ENCODE measurements at regions of chr17 and their contacts with region 1.

Region 1: DNA sequence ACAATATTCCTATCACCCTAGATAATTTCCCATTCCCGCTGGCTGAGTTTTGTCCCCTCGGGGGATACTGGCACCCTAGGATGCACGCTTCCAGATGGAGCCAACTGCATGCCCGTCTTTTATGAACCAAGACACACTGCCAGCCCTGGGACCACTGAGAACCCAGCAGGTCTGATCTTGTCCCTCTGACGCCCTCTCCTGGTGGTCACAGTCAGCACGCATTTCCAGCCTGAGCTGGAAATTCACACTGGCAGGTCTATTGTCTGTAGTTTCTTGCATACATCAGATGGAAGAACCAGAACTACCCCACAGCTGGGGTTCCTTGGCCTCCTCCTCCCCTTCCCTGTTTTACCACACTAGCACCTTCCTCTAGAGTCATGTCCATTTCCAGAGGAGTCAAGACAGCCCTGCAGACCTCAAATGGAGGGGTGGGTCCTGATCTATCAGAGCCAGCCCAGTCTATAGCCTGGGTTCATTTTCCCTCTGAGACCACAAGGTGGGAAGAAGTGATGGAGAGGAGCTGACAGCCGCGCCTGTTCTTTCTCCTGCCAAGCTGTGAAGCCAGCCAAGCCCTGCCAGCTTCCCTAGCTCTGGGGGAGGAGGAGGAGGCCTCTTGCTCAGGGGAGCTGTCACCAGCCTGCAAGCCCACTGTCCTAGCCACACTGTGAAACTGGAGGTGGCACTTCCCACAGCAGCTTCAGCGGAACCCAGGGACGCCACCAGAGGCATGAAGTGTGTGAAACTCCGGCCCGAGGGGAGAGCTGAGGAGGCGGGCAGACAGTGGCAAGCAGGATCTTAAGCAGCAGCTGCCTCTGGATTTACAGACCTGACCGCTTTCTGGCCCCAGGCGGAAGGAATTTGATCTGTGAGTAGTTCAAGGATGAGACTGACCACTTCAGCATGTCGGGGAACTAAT is 29.3 kb downstream of the MXRA7 start:
- DNase-seq: peak; percentile 87
- ATAC-seq: peak; percentile 80
- H3K4me3 Mint-ChIP-seq: no peak overlapping the region
- H3K27ac Mint-ChIP-seq: no peak overlapping the region
- H3K4me1 Mint-ChIP-seq: peaks cover 5% of the 10 kb centered on the region
- H3K27me3 Mint-ChIP-seq: no peaks in the 10 kb centered on the region
- CTCF ChIP-seq: peak; percentile 81

Region 2: GRCh38 chr17:76385892-76386721 is 295.4 kb before region 1 on chr17:
- CTCF ChIA-PET with region 1: no interaction called
- POLR2A ChIA-PET with region 1: no interaction called
- intact Hi-C with region 1: no loop called
- DNase-seq: peak; percentile 93
- ATAC-seq: peak; percentile 22
- H3K4me3 Mint-ChIP-seq: peak overlapping the region; percentile 67
- H3K27ac Mint-ChIP-seq: no peak overlapping the region
- H3K4me1 Mint-ChIP-seq: peaks cover 3% of the 10 kb centered on the region
- H3K27me3 Mint-ChIP-seq: no peaks in the 10 kb centered on the region
- CTCF ChIP-seq: peak; percentile 21

Region 3: GRCh38 chr17:76557368-76558197 is 123.9 kb before region 1 on chr17:
- CTCF ChIA-PET with region 1: interaction called, 16 read pairs
- POLR2A ChIA-PET with region 1: interaction called, 3 read pairs
- intact Hi-C with region 1: no loop called
- DNase-seq: peak; percentile 97
- ATAC-seq: peak; percentile 94
- H3K4me3 Mint-ChIP-seq: peak overlapping the region; percentile 99
- H3K27ac Mint-ChIP-seq: peak overlapping the region; percentile 98
- H3K4me1 Mint-ChIP-seq: peaks cover 46% of the 10 kb centered on the region
- H3K27me3 Mint-ChIP-seq: no peaks in the 10 kb centered on the region
- CTCF ChIP-seq: peak; percentile 60

Region 4: GRCh38 chr17:76635659-76636360 is 45.7 kb before region 1 on chr17:
- CTCF ChIA-PET with region 1: interaction called, 10 read pairs
- POLR2A ChIA-PET with region 1: no interaction called
- intact Hi-C with region 1: no loop called
- DNase-seq: no peak
- ATAC-seq: no peak
- H3K4me3 Mint-ChIP-seq: no peak overlapping the region
- H3K27ac Mint-ChIP-seq: no peak overlapping the region
- H3K4me1 Mint-ChIP-seq: no peaks in the 10 kb centered on the region
- H3K27me3 Mint-ChIP-seq: no peaks in the 10 kb centered on the region
- CTCF ChIP-seq: no peak

Region 5: DNA sequence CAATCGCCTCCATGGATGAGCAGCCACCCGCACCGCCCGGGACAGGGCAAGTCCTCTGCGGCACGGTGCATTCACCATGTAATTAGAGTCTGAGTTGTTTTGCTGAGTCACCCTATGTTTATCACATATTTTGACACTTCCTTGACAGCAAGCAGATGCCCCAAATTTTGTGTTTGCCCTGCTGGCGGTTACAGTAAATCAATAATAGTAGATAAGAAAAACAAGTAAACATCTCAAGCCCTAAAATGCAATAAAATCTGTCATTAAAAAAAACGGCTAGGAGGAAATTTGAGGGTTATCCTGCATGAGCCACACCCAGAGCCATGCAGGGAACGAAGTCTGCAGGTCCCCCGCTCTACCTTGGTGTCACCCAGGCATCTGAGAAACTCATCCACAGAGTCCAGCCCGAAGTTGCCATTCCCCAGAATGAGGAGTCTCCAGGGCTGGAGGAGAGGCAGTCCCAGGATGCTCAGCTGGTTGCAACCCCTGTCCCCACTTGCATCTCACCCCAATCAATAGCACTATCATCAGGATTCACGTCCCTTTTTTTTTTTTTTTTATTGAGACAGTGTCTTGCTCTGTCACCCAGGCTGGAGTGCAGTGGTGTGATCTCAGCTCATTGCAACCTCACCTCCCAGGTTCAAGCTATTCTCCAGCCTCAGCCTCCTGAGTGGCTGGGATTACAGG is 21.4 kb before region 1 on chr17:
- CTCF ChIA-PET with region 1: interaction called, 26 read pairs
- POLR2A ChIA-PET with region 1: no interaction called
- intact Hi-C with region 1: no loop called
- DNase-seq: no peak
- ATAC-seq: peak; percentile 51
- H3K4me3 Mint-ChIP-seq: no peak overlapping the region
- H3K27ac Mint-ChIP-seq: peak overlapping the region; percentile 70
- H3K4me1 Mint-ChIP-seq: peaks cover 22% of the 10 kb centered on the region
- H3K27me3 Mint-ChIP-seq: no peaks in the 10 kb centered on the region
- CTCF ChIP-seq: no peak

Region 6: GRCh38 chr17:76671123-76671911 is 10.2 kb before region 1 on chr17:
- CTCF ChIA-PET with region 1: interaction called, 23 read pairs
- POLR2A ChIA-PET with region 1: interaction called, 5 read pairs
- intact Hi-C with region 1: no loop called
- DNase-seq: peak; percentile 100
- ATAC-seq: peak; percentile 99
- H3K4me3 Mint-ChIP-seq: peak overlapping the region; percentile 89
- H3K27ac Mint-ChIP-seq: peak overlapping the region; percentile 95
- H3K4me1 Mint-ChIP-seq: peaks cover 32% of the 10 kb centered on the region
- H3K27me3 Mint-ChIP-seq: no peaks in the 10 kb centered on the region
- CTCF ChIP-seq: no peak

Region 7: GRCh38 chr17:76696763-76697701 is 15.6 kb after region 1 on chr17:
- CTCF ChIA-PET with region 1: interaction called, 14 read pairs
- POLR2A ChIA-PET with region 1: no interaction called
- intact Hi-C with region 1: no loop called
- DNase-seq: no peak
- ATAC-seq: no peak
- H3K4me3 Mint-ChIP-seq: no peak overlapping the region
- H3K27ac Mint-ChIP-seq: no peak overlapping the region
- H3K4me1 Mint-ChIP-seq: no peaks in the 10 kb centered on the region
- H3K27me3 Mint-ChIP-seq: no peaks in the 10 kb centered on the region
- CTCF ChIP-seq: no peak

Region 8: DNA sequence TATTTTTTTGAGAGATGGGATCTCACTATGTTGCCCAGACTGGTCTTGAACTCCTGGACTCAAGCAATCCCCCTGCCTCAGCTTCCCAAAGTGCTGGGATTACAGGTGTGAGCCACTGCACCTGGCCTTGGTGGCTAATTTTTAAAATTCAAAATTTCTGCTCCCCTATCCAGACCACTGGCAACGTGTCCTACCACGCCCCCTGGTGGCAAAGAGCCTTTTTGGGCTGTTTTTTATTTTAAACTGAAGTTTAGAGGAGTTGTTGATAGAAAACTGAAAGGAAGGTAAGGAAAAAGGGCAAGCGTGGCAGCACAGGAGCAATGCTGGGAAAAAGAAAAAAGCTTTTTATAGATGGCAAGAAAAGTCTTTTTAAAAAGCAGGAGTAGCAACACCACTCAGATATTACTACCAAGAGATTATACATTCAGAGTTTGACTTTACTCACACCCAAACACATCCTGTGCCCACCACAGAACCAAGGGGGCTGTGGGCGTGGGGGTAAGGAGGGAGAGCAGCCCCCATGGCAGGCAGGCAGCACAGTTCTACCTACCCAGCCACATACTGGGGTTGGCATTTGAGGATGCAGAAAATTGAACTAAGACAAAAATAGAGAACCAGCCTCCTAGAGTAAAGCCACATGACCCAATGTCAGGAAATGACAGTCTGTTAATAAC is 33.5 kb after region 1 on chr17:
- CTCF ChIA-PET with region 1: interaction called, 22 read pairs
- POLR2A ChIA-PET with region 1: no interaction called
- intact Hi-C with region 1: no loop called
- DNase-seq: peak; percentile 90
- ATAC-seq: no peak
- H3K4me3 Mint-ChIP-seq: peak overlapping the region; percentile 53
- H3K27ac Mint-ChIP-seq: peak overlapping the region; percentile 92
- H3K4me1 Mint-ChIP-seq: peaks cover 61% of the 10 kb centered on the region
- H3K27me3 Mint-ChIP-seq: no peaks in the 10 kb centered on the region
- CTCF ChIP-seq: peak; percentile 88

Region 9: DNA sequence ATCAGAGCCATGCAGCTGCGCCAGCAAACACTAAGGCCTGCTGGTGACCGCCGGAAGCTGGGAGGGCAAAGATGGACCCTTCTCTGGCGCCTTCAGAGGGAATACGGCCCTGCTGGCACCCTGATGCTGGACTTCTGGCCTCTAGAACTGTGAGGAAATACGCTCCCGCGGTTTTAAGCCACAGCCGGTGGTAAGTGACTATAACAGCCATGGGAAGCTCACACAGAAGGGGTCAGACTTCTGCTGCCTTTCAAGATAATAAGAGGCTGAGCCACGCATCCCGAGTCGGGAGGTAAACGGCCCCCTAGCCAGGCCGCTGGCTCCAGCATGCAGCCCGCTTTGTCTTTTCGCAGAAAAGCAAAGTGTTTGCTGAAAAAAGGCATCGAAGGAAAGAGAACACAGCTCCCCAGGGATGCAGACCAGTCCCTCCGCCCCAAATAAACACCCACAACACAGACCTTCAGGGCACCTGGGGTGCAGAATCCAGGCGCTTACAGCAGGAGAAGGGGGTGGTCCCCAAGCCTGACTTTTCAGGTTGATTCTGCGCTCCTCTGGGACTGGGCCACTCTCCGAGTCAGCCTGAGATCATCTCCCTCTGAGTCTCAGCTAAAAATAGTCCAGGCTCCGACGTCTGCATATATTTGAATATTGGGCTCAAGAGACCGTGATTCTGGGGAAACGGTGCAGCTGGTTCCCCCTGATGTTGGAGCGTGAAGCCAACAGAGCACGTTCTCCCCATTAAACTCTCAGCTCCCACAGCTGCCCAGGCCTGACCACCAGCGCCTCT is 276.4 kb after region 1 on chr17:
- CTCF ChIA-PET with region 1: no interaction called
- POLR2A ChIA-PET with region 1: no interaction called
- intact Hi-C with region 1: no loop called
- DNase-seq: no peak
- ATAC-seq: no peak
- H3K4me3 Mint-ChIP-seq: no peak overlapping the region
- H3K27ac Mint-ChIP-seq: no peak overlapping the region
- H3K4me1 Mint-ChIP-seq: no peaks in the 10 kb centered on the region
- H3K27me3 Mint-ChIP-seq: no peaks in the 10 kb centered on the region
- CTCF ChIP-seq: no peak